ENCODE measurements at regions of chr5 and their contacts with region 1.

Region 1: GRCh38 chr5:43120720-43121564 is at the start of gene ZNF131:
- DNase-seq: peak; percentile 99
- ATAC-seq: peak; percentile 88
- H3K4me3 ChIP-seq: peak within 1 kb of the TSS; percentile 82 to 91 (median 85)
- H3K4me3 Mint-ChIP-seq: peak within 1 kb of the TSS; percentile 94
- H3K27ac ChIP-seq: peak within 1 kb of the TSS; percentile 87 to 97
- H3K27ac Mint-ChIP-seq: peak within 1 kb of the TSS; percentile 97
- H3K4me1 ChIP-seq: peaks cover 24 to 26% of the 10 kb centered on the region in 2 donors
- H3K4me1 Mint-ChIP-seq: peaks cover 29% of the 10 kb centered on the region
- H3K27me3 ChIP-seq: no peaks in the 10 kb centered on the region
- H3K27me3 Mint-ChIP-seq: no peaks in the 10 kb centered on the region
- CTCF ChIP-seq: no peak
- total RNA-seq, gene ZNF131: 64.0 and 72.5 TPM in 2 replicates

Region 2: DNA sequence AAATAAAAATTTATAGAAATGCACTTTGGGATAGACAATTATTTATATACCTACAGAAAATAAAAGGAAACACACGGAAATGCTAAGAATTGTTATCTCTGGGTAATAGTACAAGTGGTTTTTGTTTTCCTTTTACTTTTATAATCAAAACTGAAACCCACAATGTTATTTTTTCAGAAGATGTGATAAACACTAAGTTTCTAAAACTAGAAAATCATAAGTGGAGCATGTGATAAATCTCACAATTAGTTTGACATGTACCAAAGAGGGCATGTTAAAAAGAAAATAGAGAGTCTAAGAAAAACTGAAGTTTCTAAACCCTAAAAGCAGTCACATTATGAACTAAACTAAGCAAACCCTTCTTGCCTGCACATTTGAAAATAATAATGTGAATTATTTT is 1311.8 kb before region 1 on chr5:
- CTCF ChIA-PET with region 1: no interaction called
- POLR2A ChIA-PET with region 1: no interaction called
- intact Hi-C with region 1: no loop called
- DNase-seq: no peak
- ATAC-seq: no peak
- H3K4me3 ChIP-seq: no peak overlapping the region
- H3K4me3 Mint-ChIP-seq: no peak overlapping the region
- H3K27ac ChIP-seq: no peak overlapping the region
- H3K27ac Mint-ChIP-seq: no peak overlapping the region
- H3K4me1 ChIP-seq: no peaks in the 10 kb centered on the region
- H3K4me1 Mint-ChIP-seq: peaks cover 10% of the 10 kb centered on the region
- H3K27me3 ChIP-seq: no peaks in the 10 kb centered on the region
- H3K27me3 Mint-ChIP-seq: no peaks in the 10 kb centered on the region
- CTCF ChIP-seq: no peak

Region 3: DNA sequence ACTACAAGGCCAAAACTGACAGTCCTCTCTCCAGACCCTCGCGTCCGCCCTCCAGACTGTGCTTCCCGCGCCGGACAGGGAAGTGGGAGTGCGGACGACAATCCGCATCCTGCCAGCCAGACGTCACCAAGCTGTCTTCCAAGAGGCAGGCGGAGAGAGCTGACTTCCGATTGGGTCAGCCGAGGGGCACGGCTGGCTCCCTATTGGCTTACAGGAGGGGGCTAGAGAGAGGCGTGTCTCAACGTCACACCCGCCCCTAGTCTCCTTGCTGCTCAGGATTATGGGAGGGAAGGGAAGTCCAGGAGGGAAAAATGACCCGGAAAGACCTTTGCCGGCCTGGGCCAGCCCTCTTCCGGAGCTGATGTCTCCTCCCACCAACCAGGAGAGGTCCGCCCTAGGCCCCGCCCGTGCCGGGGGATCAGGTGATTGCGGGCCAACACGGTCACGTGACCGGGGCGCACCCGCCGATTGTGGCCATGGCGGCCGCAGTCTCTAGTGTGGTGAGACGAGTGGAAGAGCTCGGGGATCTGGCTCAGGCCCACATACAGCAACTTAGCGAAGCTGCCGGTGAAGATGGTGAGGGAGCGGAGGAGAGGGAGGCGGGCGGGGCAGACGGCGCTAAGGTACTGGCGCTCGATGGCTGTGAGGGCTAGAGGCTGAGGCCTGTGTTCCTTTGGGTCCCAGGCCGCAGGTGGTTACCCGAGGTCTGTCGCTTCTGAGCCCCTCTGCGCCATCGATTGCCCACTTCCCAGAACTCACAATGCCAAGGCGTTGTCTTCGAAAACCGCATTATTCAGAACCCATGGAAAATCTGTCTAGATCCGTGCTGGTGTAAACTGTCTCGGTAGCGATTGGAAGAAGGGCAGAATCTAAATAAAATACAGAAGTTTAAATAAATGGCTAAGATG is 1216.8 kb before region 1 on chr5 and contains the start of gene RIMOC1:
- CTCF ChIA-PET with region 1: no interaction called
- POLR2A ChIA-PET with region 1: no interaction called
- intact Hi-C with region 1: loop called (anchors 1 kb)
- DNase-seq: peak; percentile 98
- ATAC-seq: peak; percentile 89
- H3K4me3 ChIP-seq: peak within 1 kb of the TSS; percentile 34 to 90 (median 80)
- H3K4me3 Mint-ChIP-seq: peak within 1 kb of the TSS; percentile 96
- H3K27ac ChIP-seq: peak within 1 kb of the TSS; percentile 89 to 98
- H3K27ac Mint-ChIP-seq: peak within 1 kb of the TSS; percentile 98
- H3K4me1 ChIP-seq: peaks cover 15 to 17% of the 10 kb centered on the region in 2 donors
- H3K4me1 Mint-ChIP-seq: peaks cover 34% of the 10 kb centered on the region
- H3K27me3 ChIP-seq: peaks cover 0 to 3% (median 1%) of the 10 kb centered on the region in 4 experiments
- H3K27me3 Mint-ChIP-seq: peaks cover 8% of the 10 kb centered on the region
- CTCF ChIP-seq: no peak
- total RNA-seq, gene RIMOC1: 32.1 and 33.1 TPM in 2 replicates

Region 4: GRCh38 chr5:42984307-42984706 is 136.6 kb before region 1 on chr5:
- CTCF ChIA-PET with region 1: no interaction called
- POLR2A ChIA-PET with region 1: no interaction called
- intact Hi-C with region 1: no loop called
- DNase-seq: no peak
- ATAC-seq: no peak
- H3K4me3 ChIP-seq: no peak overlapping the region
- H3K4me3 Mint-ChIP-seq: no peak overlapping the region
- H3K27ac ChIP-seq: no peak overlapping the region
- H3K27ac Mint-ChIP-seq: no peak overlapping the region
- H3K4me1 ChIP-seq: peaks cover 3 to 6% of the 10 kb centered on the region in 2 donors
- H3K4me1 Mint-ChIP-seq: peaks cover 25% of the 10 kb centered on the region
- H3K27me3 ChIP-seq: no peaks in the 10 kb centered on the region
- H3K27me3 Mint-ChIP-seq: no peaks in the 10 kb centered on the region
- CTCF ChIP-seq: no peak

Region 5: GRCh38 chr5:42994246-42995151 is 126.4 kb before region 1 on chr5:
- CTCF ChIA-PET with region 1: interaction called, 8 read pairs
- POLR2A ChIA-PET with region 1: interaction called, 19 read pairs
- intact Hi-C with region 1: loop called (anchors 1 kb)
- DNase-seq: peak; percentile 94
- ATAC-seq: peak; percentile 67
- H3K4me3 ChIP-seq: peak overlapping the region; percentile 78 to 97 (median 89)
- H3K4me3 Mint-ChIP-seq: peak overlapping the region; percentile 96
- H3K27ac ChIP-seq: peak overlapping the region; percentile 93 to 96
- H3K27ac Mint-ChIP-seq: peak overlapping the region; percentile 100
- H3K4me1 ChIP-seq: peaks cover 23 to 30% of the 10 kb centered on the region in 2 donors
- H3K4me1 Mint-ChIP-seq: peaks cover 32% of the 10 kb centered on the region
- H3K27me3 ChIP-seq: peaks cover 0 to 9% (median 1%) of the 10 kb centered on the region in 4 experiments
- H3K27me3 Mint-ChIP-seq: no peaks in the 10 kb centered on the region
- CTCF ChIP-seq: peak; percentile 84

Region 6: DNA sequence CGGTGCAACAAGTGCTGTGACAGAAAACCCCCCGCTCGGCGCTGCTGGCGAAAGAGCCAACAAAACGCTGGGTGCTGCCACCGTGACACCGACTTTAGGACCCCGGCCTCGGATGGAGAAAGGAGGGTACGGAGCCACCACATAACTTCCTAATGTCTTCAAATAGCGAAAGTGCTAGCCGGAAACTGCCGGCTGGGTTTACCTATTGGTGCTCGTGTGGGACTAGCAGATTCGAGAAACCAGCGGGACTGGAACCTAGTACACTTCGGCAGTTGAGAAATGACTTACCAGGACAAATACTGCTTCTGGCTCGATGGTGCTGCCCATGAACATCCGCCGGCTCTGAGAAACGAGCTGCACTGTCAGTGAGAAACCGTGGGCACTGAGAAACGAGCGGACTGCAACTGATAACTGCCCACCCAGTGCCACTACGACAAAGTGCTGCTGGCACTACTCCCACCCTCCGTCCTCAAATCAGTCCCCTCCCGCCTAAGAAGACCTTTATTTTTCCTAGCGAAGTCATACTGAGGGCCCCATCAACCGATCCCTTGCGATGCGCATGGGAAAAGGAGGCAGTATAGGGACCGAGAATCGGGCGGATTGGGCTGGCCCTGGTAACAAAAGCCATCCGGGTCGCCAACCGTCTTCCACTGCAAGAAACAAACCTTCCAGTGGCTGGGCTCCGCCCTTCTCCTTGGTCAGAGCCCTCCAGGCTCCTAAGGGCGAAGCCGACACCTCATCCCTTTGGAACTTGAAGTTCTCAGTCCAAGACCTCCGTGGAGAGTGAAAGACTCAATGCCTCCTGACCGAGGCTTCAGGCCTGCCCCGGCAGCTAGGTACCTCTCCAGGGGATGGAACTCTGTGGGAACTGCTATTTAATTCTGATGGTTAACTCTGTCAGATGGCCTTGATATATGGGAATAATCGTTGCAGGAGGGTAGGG is 53.9 kb before region 1 on chr5:
- CTCF ChIA-PET with region 1: interaction called, 9 read pairs
- POLR2A ChIA-PET with region 1: interaction called, 44 read pairs
- intact Hi-C with region 1: loop called (anchors 1 kb)
- DNase-seq: peak; percentile 96
- ATAC-seq: peak; percentile 46
- H3K4me3 ChIP-seq: peak overlapping the region; percentile 87 to 100 (median 90)
- H3K4me3 Mint-ChIP-seq: peak overlapping the region; percentile 99
- H3K27ac ChIP-seq: peak overlapping the region; percentile 98 to 99
- H3K27ac Mint-ChIP-seq: peak overlapping the region; percentile 100
- H3K4me1 ChIP-seq: peaks cover 19 to 29% of the 10 kb centered on the region in 2 donors
- H3K4me1 Mint-ChIP-seq: peaks cover 37% of the 10 kb centered on the region
- H3K27me3 ChIP-seq: no peaks in the 10 kb centered on the region
- H3K27me3 Mint-ChIP-seq: no peaks in the 10 kb centered on the region
- CTCF ChIP-seq: no peak

Region 7: DNA sequence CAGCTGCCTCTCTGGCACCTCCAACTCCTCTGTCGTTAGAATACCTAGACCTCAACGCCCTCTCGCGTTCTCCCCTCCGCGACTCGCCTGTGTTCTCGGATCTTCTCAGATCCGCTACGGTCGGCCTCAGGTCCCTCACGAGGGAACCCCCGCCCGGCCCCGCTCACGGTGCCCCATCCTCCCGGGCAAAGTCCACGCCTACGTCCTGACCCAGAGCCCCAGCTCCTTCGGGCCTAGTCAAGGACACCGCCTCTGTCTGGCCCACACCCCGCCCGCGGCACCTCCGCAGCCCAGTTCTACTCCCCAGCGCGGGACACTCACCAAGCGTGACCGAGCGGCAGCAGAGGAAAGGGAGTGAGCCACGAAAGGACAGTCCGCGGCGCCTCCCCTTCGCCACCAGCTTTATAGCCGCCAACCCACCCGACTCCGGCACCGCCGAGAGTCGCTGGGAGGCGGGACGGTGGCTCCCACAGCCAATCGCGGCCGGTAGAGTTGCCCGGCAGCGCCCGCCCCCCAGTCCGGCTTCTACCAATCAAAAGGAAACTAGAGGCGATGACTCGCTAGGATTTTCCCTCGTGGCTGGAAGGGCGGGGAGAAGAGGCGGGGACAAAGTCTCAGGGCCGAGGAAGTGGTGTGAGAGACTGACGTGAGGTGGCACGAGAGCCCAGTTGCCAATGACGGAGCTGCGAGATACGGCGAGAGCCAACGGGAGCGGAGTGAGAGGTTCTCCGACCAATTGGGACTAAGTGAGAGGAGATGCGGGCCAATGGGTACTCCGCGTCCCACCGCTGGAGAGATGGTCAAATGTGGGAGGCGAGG is 192.3 kb after region 1 on chr5 and contains the start of gene HMGCS1:
- CTCF ChIA-PET with region 1: interaction called, 6 read pairs
- POLR2A ChIA-PET with region 1: interaction called, 23 read pairs
- intact Hi-C with region 1: loop called (anchors 1 kb)
- DNase-seq: peak; percentile 100
- ATAC-seq: peak; percentile 84
- H3K4me3 ChIP-seq: peak within 1 kb of the TSS; percentile 77 to 94 (median 89)
- H3K4me3 Mint-ChIP-seq: peak within 1 kb of the TSS; percentile 99
- H3K27ac ChIP-seq: peak within 1 kb of the TSS; percentile 95 to 98
- H3K27ac Mint-ChIP-seq: peak within 1 kb of the TSS; percentile 97
- H3K4me1 ChIP-seq: peaks cover 18 to 31% of the 10 kb centered on the region in 2 donors
- H3K4me1 Mint-ChIP-seq: peaks cover 39% of the 10 kb centered on the region
- H3K27me3 ChIP-seq: no peaks in the 10 kb centered on the region
- H3K27me3 Mint-ChIP-seq: no peaks in the 10 kb centered on the region
- CTCF ChIP-seq: no peak
- total RNA-seq, gene HMGCS1: 68.4 and 68.7 TPM in 2 replicates

Region 8: DNA sequence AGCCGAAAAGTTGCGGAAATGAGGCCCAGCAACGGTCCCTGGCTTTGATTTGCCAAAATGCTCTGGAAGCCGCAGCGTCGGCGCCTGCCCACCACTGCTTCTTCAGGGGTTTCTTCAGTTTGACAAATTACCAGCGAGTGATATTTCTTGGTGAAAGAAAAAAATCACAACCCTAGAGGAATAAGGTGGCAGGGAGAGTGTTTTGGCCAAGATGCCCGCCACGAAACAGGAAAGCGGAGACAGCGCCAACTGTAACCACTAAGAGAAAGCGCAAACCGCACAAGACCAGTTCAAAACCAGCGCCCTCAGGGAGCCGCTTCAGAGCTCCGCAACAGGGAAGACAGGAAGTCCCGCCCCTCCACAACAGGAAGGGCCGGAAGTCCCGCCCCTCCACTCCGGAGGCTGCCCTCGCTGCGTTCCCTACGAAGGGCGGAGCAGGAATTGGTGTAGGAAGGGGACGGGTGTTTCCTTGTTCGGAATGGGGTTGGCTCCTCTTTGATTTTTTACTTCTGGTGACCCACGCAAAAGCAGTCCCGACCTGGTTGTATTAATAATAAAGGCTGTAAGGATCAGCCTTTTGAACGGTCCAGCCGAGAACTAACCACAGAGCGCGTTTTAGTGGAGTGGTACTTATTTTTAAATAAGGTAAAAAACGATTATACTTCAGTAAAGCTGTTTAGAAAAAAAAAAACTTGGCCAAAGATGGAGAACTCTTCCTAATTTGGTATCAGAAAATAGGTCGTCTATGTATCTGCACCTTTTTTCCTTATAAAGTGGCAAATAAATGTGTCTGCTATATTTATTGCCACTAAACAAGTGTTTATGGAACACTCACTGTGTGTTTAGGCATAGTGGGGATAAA is 394.1 kb after region 1 on chr5 and contains the start of gene C5orf34:
- CTCF ChIA-PET with region 1: no interaction called
- POLR2A ChIA-PET with region 1: interaction called, 4 read pairs
- intact Hi-C with region 1: loop called (anchors 1 kb)
- DNase-seq: peak; percentile 93
- ATAC-seq: peak; percentile 99
- H3K4me3 ChIP-seq: peak within 1 kb of the TSS; percentile 78 to 93 (median 88)
- H3K4me3 Mint-ChIP-seq: peak within 1 kb of the TSS; percentile 94
- H3K27ac ChIP-seq: peak within 1 kb of the TSS; percentile 85 to 93
- H3K27ac Mint-ChIP-seq: peak within 1 kb of the TSS; percentile 88
- H3K4me1 ChIP-seq: peaks cover 12 to 18% of the 10 kb centered on the region in 2 donors
- H3K4me1 Mint-ChIP-seq: peaks cover 23% of the 10 kb centered on the region
- H3K27me3 ChIP-seq: no peaks in the 10 kb centered on the region
- H3K27me3 Mint-ChIP-seq: no peaks in the 10 kb centered on the region
- CTCF ChIP-seq: no peak
- total RNA-seq, gene C5orf34: 5.1 and 5.5 TPM in 2 replicates

Measured in B cell (primary cell).